PC-3 (cell line): ENCODE measurements at regions of chr3 and their contacts with region 1.

Region 1: DNA sequence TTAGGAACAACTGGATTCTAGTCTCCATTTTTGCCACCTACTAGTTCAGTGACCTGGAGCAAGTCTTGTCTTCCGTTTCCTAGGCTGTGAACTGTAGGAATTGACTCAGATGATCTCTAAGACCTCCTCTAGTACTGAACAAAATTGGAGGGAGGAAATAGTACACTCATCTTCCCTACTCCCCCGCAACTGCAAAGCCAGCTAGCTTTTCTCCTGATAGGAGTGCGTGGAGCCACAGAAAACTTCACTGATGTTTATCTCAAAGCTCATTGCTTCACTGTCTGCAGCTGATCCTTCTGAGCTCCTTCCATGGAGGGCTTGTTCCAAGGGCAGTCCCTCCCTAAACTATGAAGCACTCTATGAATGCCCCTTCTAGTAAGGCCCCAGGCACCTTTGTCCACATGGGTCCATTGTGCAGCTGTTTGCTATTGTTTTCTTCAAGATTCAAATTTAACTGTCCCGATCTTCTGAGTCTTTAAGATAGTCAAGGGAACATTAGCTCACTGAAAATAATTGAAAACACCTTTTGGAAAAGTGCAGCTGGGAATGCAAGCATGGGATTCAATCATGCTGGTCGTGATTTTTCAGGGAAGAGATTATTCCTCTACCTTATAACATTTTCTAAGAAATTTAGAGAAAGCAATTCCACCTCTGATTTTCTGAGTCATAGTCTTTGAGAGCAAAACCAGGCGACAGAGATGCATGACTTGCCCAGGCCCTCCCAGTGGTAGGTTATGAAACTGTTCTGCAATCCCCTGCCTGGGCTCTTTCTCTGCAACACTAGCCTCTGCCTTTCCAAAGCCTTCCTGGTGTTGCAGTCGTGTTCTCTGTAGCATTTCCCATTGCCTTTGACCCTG is 24.3 kb downstream of the FILIP1L start:
- DNase-seq: peak; percentile 67
- ATAC-seq: peak; percentile 26; the same call in 1 of the 2 replicates
- H3K4me3 ChIP-seq: no peak overlapping the region
- H3K27ac ChIP-seq: no peak overlapping the region
- H3K4me1 ChIP-seq: peaks cover 62% of the 10 kb centered on the region
- H3K27me3 ChIP-seq: no peaks in the 10 kb centered on the region
- CTCF ChIP-seq: peak; percentile 69

Region 2: DNA sequence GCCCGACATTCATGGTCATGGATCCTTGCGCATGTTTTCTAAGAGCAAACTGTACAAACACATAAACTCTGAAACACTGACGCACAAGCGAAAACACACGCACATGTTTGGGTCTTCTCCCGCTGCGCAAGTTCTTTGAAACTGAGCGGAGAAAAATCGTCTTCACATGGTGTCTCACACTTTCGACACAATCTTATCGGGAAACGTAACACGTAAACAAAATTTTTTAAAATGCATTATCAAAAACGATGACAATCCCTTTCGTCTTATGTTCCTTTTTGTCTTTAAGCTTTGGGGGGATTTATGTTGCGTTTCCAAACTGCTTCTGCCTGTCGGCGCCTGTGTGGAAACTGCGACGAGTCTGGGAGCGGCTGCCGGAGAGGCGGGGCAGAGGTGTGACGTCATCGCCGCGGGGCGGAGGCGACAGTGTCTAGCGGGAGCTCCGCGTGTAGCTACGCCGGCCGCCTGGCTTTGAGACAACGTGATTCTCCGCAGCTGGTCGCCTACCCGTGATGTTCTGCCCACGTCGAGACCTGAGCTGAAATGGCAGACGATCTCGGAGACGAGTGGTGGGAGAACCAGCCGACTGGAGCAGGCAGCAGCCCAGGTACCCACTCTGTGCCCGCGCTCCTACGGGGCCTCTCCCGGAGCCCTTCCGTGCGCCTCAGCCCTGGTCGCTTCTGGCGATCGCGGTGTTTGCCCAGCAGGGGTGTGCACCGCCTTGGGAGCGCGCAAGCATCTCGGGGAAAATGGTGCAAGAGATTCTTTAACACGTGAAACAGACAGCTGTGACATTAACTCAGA is 272.4 kb before region 1 on chr3 and contains the start of gene CMSS1:
- CTCF ChIA-PET with region 1: no interaction called
- POLR2A ChIA-PET with region 1: no interaction called
- intact Hi-C with region 1: no loop called
- DNase-seq: peak; percentile 93
- ATAC-seq: peak; percentile 93
- H3K4me3 ChIP-seq: peak within 1 kb of the TSS; percentile 86
- H3K27ac ChIP-seq: peak within 1 kb of the TSS; percentile 69
- H3K4me1 ChIP-seq: peaks cover 20% of the 10 kb centered on the region
- H3K27me3 ChIP-seq: no peaks in the 10 kb centered on the region
- CTCF ChIP-seq: 0 out of 2 replicates have a peak, but pooled peaks have one; percentile 28
- total RNA-seq, gene CMSS1: 51.7 and 63.1 TPM in 2 replicates

Region 3: GRCh38 chr3:100042166-100042981 is 47.7 kb before region 1 on chr3:
- CTCF ChIA-PET with region 1: no interaction called
- POLR2A ChIA-PET with region 1: no interaction called
- intact Hi-C with region 1: loop called (anchors 1 kb)
- DNase-seq: peak; percentile 97
- ATAC-seq: peak; percentile 71
- H3K4me3 ChIP-seq: peak overlapping the region; percentile 41
- H3K27ac ChIP-seq: peak overlapping the region; percentile 86
- H3K4me1 ChIP-seq: peaks cover 57% of the 10 kb centered on the region
- H3K27me3 ChIP-seq: no peaks in the 10 kb centered on the region
- CTCF ChIP-seq: no peak

Region 4: GRCh38 chr3:100047455-100048141 is 42.4 kb before region 1 on chr3:
- CTCF ChIA-PET with region 1: no interaction called
- POLR2A ChIA-PET with region 1: no interaction called
- intact Hi-C with region 1: loop called (anchors 1 kb)
- DNase-seq: peak; percentile 98
- ATAC-seq: peak; percentile 96
- H3K4me3 ChIP-seq: peak overlapping the region; percentile 39
- H3K27ac ChIP-seq: peak overlapping the region; percentile 86
- H3K4me1 ChIP-seq: peaks cover 48% of the 10 kb centered on the region
- H3K27me3 ChIP-seq: no peaks in the 10 kb centered on the region
- CTCF ChIP-seq: no peak

Region 5: GRCh38 chr3:100076731-100077529 is 13.1 kb before region 1 on chr3:
- CTCF ChIA-PET with region 1: no interaction called
- POLR2A ChIA-PET with region 1: no interaction called
- intact Hi-C with region 1: loop called (anchors 1 kb)
- DNase-seq: peak; percentile 6
- ATAC-seq: peak; percentile 92
- H3K4me3 ChIP-seq: no peak overlapping the region
- H3K27ac ChIP-seq: no peak overlapping the region
- H3K4me1 ChIP-seq: peaks cover 23% of the 10 kb centered on the region
- H3K27me3 ChIP-seq: no peaks in the 10 kb centered on the region
- CTCF ChIP-seq: no peak

Region 6: DNA sequence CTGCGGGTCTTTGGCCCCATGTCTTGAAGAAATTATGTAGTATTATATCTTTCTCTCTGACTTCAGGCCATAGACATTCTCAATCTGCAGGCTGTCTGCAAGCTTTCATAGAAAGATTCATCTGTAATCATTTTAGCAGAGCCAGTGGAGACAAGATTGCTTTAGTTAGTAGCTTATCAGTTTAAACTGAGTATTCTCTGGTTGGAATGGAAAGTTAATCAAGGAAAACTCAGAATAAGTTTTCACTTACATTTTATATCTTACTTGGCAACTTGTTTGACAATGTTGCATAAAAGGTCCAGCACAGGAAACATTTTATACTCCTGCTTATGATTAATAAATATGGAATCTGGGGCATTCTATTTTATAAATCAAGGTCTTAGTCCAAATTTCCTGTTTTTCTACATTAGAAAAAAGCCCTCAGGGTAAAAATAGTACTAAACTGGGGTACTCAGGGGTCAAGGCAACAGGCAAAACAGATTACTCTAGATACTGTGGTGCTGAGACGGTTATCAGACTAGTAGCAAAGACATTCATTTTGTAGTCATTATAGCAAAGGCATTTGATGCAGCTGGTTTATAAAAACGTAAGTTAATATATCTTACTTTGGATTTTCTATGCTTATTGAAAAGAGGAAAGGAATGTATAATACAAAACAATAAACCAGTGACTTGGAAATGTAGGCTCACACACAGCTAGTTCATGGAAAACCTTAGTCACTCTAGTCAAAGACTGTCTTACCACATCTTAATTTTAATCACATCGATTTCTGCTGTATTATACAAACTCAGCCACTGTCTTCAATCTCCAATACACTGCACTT is 69.5 kb after region 1 on chr3:
- CTCF ChIA-PET with region 1: no interaction called
- POLR2A ChIA-PET with region 1: no interaction called
- intact Hi-C with region 1: loop called (anchors 1 kb)
- DNase-seq: peak; percentile 87
- ATAC-seq: peak; percentile 77
- H3K4me3 ChIP-seq: peak overlapping the region; percentile 22; the same call in 1 of the 2 replicates
- H3K27ac ChIP-seq: peak overlapping the region; percentile 65
- H3K4me1 ChIP-seq: peaks cover 33% of the 10 kb centered on the region
- H3K27me3 ChIP-seq: no peaks in the 10 kb centered on the region
- CTCF ChIP-seq: no peak

Region 7: DNA sequence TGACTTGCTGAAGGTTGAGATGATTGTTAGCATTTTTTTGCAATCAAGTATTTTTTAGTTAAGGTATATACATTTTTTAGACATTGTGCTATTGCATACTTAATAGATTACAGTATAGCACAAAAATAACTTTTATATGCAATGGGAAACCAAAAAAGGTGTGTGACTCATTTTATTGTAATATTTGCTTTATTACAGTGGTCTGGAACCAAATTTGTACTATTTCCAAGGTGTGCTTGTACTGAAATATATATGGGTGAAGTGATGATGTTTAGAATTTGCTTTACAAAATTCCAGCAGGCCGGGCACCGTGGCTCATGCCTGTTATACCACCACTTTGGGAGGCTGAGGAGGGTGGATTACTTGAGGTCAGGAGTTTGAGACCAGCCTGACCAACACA is 141.6 kb after region 1 on chr3:
- CTCF ChIA-PET with region 1: no interaction called
- POLR2A ChIA-PET with region 1: no interaction called
- intact Hi-C with region 1: loop called (anchors 2 kb)
- DNase-seq: peak; percentile 97
- ATAC-seq: peak; percentile 97
- H3K4me3 ChIP-seq: no peak overlapping the region
- H3K27ac ChIP-seq: peak overlapping the region; percentile 69
- H3K4me1 ChIP-seq: peaks cover 16% of the 10 kb centered on the region
- H3K27me3 ChIP-seq: no peaks in the 10 kb centered on the region
- CTCF ChIP-seq: no peak

Region 8: GRCh38 chr3:100260685-100261484 is 170.8 kb after region 1 on chr3 and contains the start of gene TBC1D23:
- CTCF ChIA-PET with region 1: no interaction called
- POLR2A ChIA-PET with region 1: interaction called, 5 read pairs
- intact Hi-C with region 1: loop called (anchors 5 kb)
- DNase-seq: peak; percentile 100
- ATAC-seq: peak; percentile 99
- H3K4me3 ChIP-seq: peak within 1 kb of the TSS; percentile 88
- H3K27ac ChIP-seq: peak within 1 kb of the TSS; percentile 70
- H3K4me1 ChIP-seq: peaks cover 46% of the 10 kb centered on the region
- H3K27me3 ChIP-seq: no peaks in the 10 kb centered on the region
- CTCF ChIP-seq: no peak
- total RNA-seq, gene TBC1D23: 25.6 and 37.9 TPM in 2 replicates